ENCODE measurements at regions of chr2 and their contacts with region 1.

Region 1: GRCh38 chr2:37344453-37345361 is at the start of gene QPCT:
- DNase-seq: peak; percentile 60 to 87
- ATAC-seq: peak; percentile 83 to 87
- H3K4me3 ChIP-seq: peak within 1 kb of the TSS; percentile 71
- H3K27ac ChIP-seq: peak within 1 kb of the TSS; percentile 69 to 87
- H3K4me1 ChIP-seq: peaks cover 19% of the 10 kb centered on the region
- CTCF ChIP-seq: no peak
- EP300 ChIP-seq: no peak
- POLR2A ChIP-seq: peak; percentile 32; the same call in 1 of the 2 replicates
- RAD21 ChIP-seq: no peak; a peak in 1 of 5 replicates
- polyA plus RNA-seq, gene QPCT: 42.7 and 68.7 TPM in 2 replicates

Region 2: GRCh38 chr2:37330681-37331080 is 14.0 kb before region 1 on chr2:
- CTCF ChIA-PET with region 1: interaction called, 14 read pairs
- POLR2A ChIA-PET with region 1: no interaction called
- DNase-seq: no peak
- ATAC-seq: no peak
- H3K4me3 ChIP-seq: no peak overlapping the region
- H3K27ac ChIP-seq: no peak overlapping the region
- H3K4me1 ChIP-seq: no peaks in the 10 kb centered on the region
- CTCF ChIP-seq: no peak
- EP300 ChIP-seq: no peak
- POLR2A ChIP-seq: no peak
- RAD21 ChIP-seq: no peak

Region 3: DNA sequence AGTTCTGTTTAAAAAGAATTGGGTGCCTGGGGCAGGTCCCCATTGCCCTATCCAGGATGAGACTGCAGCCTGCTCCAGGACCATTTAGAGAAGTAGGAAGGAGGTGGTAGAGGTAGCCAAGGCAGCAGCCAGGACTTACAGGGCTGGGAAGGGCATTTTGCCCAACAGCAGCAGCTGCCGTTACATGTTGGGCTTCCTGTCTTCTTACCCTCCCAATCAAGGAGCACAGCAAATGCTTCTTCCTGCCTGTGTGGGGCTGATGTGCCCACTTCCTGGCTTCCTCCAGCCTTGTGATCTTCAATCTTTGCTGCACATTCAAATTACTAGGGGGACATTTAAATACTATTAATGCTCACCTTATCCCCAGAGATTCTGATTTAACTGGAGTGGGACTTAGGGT is 111.8 kb after region 1 on chr2:
- CTCF ChIA-PET with region 1: no interaction called
- POLR2A ChIA-PET with region 1: no interaction called
- DNase-seq: no peak
- ATAC-seq: no peak; a peak in 2 of 6 replicates
- H3K4me3 ChIP-seq: no peak overlapping the region
- H3K27ac ChIP-seq: no peak overlapping the region
- H3K4me1 ChIP-seq: no peaks in the 10 kb centered on the region
- CTCF ChIP-seq: no peak
- EP300 ChIP-seq: no peak
- POLR2A ChIP-seq: 0 out of 2 replicates have a peak, but pooled peaks have one; percentile 18
- RAD21 ChIP-seq: no peak

Region 4: DNA sequence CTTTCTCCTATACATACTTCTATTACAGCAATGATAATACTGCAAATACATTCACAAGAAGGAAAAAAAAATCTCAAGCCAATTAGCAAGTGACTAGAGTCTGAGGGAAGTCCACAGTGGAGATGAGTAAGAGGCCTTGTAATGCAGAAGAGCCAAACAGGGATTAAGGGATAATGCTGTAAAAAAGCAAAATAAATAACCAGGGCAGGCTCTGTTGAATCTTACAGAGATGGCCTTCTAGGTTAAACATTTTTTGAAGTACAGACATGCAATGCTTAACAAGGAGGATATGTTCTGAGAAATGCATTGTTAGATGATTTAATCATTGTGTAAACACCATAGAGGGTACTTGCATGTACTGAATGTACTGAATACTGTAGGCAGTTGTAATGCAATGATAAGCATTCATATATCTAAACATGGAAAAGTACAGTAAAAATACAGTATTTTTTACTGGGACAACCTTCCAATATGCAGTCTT is 458.2 kb after region 1 on chr2:
- CTCF ChIA-PET with region 1: no interaction called
- POLR2A ChIA-PET with region 1: no interaction called
- DNase-seq: peak; percentile 71 to 90
- ATAC-seq: peak; percentile 95
- H3K4me3 ChIP-seq: no peak overlapping the region
- H3K27ac ChIP-seq: peak overlapping the region; percentile 89 to 96
- H3K4me1 ChIP-seq: peaks cover 42% of the 10 kb centered on the region
- CTCF ChIP-seq: no peak
- EP300 ChIP-seq: peak; percentile 81 to 89; a peak in 4 of 5 replicates
- POLR2A ChIP-seq: no peak
- RAD21 ChIP-seq: peak; percentile 17 to 60; a peak in 3 of 5 replicates

Measured in A549 (cell line).